Panc1 (cell line): ENCODE measurements at regions of chr2 and their contacts with region 1.

Region 1: GRCh38 chr2:156332534-156333273 is at the start of gene NR4A2:
- DNase-seq: no peak
- ATAC-seq: peak; percentile 85
- H3K4me3 ChIP-seq: peak within 1 kb of the TSS; percentile 78 to 83
- H3K27ac ChIP-seq: peak within 1 kb of the TSS; percentile 65; the same call in 1 of the 2 replicates
- H3K4me1 ChIP-seq: peaks cover 13% of the 10 kb centered on the region
- H3K27me3 ChIP-seq: no peaks in the 10 kb centered on the region
- CTCF ChIP-seq: no peak
- total RNA-seq, gene NR4A2: 0.85 TPM

Region 2: DNA sequence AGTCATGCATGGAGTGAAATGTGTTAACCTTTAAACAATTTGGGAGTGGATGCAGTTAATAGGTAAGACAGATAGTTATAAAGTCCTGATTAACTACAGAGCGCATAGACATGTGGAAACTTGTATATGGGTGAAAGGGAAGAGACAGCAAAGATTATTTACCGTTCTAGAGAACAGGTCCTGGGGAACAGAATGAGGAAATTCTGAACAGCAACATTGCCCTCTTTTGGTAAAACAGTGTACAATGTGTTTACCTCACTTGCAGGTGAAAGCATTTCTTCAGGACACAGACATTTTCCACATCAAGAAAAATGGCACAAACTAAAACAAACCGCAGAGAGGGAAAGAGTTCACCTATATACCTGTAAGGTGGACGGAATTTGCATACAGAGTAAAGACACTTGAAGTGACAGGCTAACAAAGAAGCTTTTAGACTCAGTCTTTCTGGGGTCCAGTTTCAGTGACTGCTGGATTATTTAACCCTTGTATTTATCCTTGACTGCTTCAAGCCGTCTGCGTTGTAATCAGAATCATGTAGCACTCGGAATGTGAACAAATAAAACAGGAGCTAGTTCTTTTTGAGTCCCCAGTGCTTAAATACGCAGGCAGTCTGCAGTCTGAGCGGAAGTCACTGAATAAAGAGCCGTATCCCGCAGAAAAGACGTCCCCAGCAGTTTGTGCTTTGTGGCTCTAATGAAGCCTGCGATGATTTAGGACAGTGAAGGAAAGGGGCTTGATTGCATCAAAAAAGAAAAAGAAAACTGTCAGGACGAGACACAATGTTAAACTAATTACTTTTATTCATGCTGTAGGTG is 560.0 kb after region 1 on chr2:
- CTCF ChIA-PET with region 1: no interaction called
- POLR2A ChIA-PET with region 1: no interaction called
- in situ Hi-C with region 1: no loop called
- intact Hi-C with region 1: loop called (anchors 10 kb)
- DNase-seq: peak; percentile 30
- ATAC-seq: peak; percentile 83; the same call in 1 of the 2 replicates
- H3K4me3 ChIP-seq: peak overlapping the region; percentile 19 to 31
- H3K27ac ChIP-seq: no peak overlapping the region
- H3K4me1 ChIP-seq: 0 out of 2 replicates have a peak, but pooled peaks cover 3% of the 10 kb centered on the region
- H3K27me3 ChIP-seq: no peaks in the 10 kb centered on the region; the same call in 1 of the 2 replicates
- CTCF ChIP-seq: peak; percentile 58